ENCODE measurements at regions of chr14 and their contacts with region 1.

Region 1: DNA sequence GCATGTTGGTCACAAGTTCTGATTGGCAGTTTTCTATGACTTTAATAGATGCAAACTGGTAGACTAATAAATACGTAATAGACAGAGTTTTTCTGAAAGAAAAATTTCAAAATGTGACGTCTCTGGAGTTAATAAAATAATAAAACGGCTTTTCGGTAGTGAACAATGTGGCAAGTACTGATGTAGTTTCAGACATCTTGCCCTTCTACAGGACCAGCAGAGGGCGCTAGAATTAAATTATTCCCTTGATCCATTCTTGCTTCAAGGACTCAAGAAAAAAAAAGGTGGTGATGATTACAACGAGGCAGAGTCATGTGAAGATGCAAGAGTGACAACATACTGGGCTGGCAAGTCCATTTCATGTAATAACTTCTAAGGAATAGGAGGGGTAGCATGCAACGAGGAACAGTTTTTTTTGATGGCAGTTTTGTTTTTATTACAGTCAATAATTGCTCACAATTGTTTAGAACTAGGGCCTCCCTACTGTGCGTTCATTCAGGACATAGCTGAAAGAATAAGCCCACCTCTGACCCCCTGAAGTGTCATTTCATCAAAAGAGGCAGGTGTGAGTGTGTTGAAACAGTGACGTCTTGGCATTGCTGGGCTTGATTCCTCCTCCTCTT is 101.0 kb upstream of the GZMB start:
- DNase-seq: peak in 3 of 10 donors; percentile 11 to 61 (median 38)
- H3K4me3 ChIP-seq: no peak overlapping the region
- H3K27ac ChIP-seq: no peak overlapping the region
- H3K27me3 ChIP-seq: no peaks in the 10 kb centered on the region
- CTCF ChIP-seq: peak; percentile 77 to 98 (median 88)

Region 2: GRCh38 chr14:24630087-24630871 is 104.7 kb before region 1 on chr14:
- intact Hi-C with region 1: no loop called
- DNase-seq: no peak
- H3K4me3 ChIP-seq: no peak overlapping the region
- H3K27ac ChIP-seq: no peak overlapping the region
- H3K27me3 ChIP-seq: no peaks in the 10 kb centered on the region
- CTCF ChIP-seq: no peak

Region 3: DNA sequence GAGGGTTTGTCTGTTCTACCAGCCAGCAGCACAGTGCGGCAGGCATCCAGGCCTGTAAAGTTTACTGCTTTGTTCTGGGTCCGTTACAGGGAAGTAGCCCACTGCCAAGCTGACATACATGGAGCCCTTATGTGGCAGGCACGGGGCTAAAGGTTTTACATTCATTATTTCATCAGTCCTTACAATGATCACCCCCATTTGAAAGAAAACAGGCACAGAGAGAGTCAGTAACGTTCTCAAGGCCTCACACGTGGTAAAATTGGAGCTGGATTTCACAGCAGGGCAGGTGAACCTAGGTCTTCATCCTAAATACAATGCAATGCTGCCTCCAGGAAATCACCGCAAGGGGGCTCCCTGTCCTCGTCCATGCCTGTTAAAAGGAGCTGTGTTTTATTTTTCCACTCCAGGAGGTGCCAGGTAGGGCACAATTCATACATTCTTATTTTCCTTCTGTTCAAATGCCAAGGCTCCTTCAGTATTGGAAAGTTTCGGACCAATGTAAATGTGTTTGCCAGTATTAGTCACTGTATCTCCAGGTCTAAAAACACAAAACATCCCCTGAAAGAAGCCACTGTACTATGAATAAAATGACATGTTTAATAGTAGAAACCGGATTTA is 71.2 kb after region 1 on chr14:
- intact Hi-C with region 1: loop called in 1 of 2 experiments (anchors 5 kb)
- DNase-seq: peak; percentile 6 to 84 (median 65)
- H3K4me3 ChIP-seq: no peak overlapping the region
- H3K27ac ChIP-seq: peak overlapping the region in 2 of 59 donors; percentile 1 to 9
- H3K27me3 ChIP-seq: no peaks in the 10 kb centered on the region
- CTCF ChIP-seq: peak; percentile 54 to 92 (median 81)

Region 4: DNA sequence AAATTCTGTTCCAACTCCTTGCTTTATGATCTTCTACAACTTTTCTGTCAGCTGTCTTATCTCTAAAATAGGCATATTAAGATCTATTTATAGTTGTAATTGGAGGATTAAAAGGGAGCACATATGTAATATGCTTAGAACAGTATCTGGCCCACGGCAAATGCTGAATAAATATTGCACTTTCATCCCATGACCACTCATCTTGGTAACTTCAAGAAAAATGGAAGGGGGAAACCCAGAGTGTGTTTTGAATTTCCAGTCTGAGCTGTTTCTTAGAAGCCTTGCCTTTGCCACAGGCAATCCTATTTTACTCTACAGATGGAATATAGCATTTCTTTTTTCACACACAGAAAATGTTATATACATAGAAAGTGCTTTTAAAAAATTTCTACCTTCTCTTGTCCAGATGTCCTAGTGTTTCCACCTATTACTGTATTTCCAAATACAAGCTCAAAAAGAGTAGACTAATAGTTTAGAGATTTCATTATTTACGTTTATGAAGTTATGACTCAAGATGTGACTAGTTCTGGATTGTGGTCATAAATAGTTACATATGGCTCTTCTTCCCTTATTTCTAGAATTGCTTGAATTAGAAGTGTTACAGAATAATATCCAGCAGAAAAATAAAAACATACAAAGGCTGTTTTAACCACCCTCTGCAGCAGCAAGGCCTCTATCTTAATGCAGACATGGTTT is 321.2 kb after region 1 on chr14:
- intact Hi-C with region 1: loop called in 1 of 2 experiments (anchors 5 kb)
- DNase-seq: no peak
- H3K4me3 ChIP-seq: no peak overlapping the region
- H3K27ac ChIP-seq: peak overlapping the region in 51 of 59 donors; percentile 12 to 91 (median 79)
- H3K27me3 ChIP-seq: no peaks in the 10 kb centered on the region
- CTCF ChIP-seq: no peak

Region 5: DNA sequence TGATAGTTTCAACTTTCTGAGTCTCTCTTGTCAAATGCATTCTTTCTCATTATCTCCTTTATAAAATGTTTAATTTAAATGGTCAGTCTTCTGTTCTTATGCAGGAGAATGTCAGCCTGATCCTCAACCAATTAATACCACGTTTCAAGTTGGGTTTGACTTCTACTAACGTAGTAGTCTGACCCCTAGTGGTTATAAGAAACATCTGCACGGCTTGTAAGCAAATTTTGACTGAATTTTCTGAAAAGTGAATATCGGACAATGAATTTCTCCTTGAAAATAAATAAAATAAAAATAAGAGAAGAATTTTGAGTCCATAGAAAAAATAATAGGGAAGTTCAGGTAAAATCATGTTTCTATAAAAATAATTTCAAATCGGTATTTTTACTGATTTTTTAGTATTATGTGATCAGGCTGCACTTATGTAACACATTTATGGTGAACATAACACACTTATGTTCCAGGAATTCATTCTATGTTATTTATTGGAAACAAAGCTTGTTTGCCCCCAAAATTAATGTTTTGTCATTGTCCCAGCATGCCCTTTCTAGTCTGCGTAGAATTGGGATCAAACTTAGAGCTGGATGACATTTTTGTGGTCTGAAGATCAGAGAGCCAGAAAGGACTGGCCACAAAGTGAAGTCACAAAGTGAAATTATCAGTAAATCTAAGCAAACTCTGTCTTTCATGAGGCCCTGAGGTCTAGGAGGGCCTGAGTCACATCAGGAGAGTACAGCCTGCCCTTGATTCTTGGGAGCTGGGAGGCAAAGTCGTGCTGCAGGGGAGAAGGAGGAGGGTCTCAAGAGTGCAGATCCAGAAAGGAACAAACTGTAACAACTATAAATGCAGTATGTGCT is 416.2 kb after region 1 on chr14:
- intact Hi-C with region 1: loop called in 1 of 2 experiments (anchors 5 kb)
- DNase-seq: no peak
- H3K4me3 ChIP-seq: no peak overlapping the region
- H3K27ac ChIP-seq: no peak overlapping the region
- H3K27me3 ChIP-seq: no peaks in the 10 kb centered on the region
- CTCF ChIP-seq: peak; percentile 71 to 98 (median 88)

Measured in dorsolateral prefrontal cortex (tissue), 120 donors.